ENCODE measurements at regions of chr5 and their contacts with region 1.

Region 1: GRCh38 chr5:155091063-155091648 is 77.6 kb downstream of the KIF4B start:
- DNase-seq: peak in 4 of 5 donors; percentile 36 to 45 (median 38)
- ATAC-seq: peak; percentile 79 to 90 (median 85)
- H3K4me3 ChIP-seq: no peak overlapping the region
- H3K27ac ChIP-seq: peak overlapping the region; percentile 2 to 89 (median 64)
- H3K4me1 ChIP-seq: peaks cover 0 to 29% (median 8%) of the 10 kb centered on the region in 12 donors
- H3K27me3 ChIP-seq: no peaks in the 10 kb centered on the region
- CTCF ChIP-seq: no peak
- POLR2A ChIP-seq: no peak

Region 2: GRCh38 chr5:155052532-155052931 is 38.6 kb before region 1 on chr5:
- intact Hi-C with region 1: loop called in 1 of 10 experiments (anchors 1 kb)
- DNase-seq: peak in 2 of 5 donors; percentile 32 to 46
- ATAC-seq: peak; percentile 13 to 75 (median 54)
- H3K4me3 ChIP-seq: no peak overlapping the region
- H3K27ac ChIP-seq: peak overlapping the region in 7 of 12 donors; percentile 3 to 61 (median 20)
- H3K4me1 ChIP-seq: peaks cover 0 to 24% (median 1%) of the 10 kb centered on the region in 12 donors
- H3K27me3 ChIP-seq: no peaks in the 10 kb centered on the region
- CTCF ChIP-seq: no peak
- POLR2A ChIP-seq: no peak

Measured in heart left ventricle (tissue), 16 donors.